ENCODE measurements at regions of chr12 and their contacts with region 1.

Region 1: GRCh38 chr12:68040450-68041075 is 51.3 kb downstream of the IFNG-AS1 start:
- DNase-seq: peak; percentile 85
- H3K4me3 Mint-ChIP-seq: no peak overlapping the region
- H3K27ac Mint-ChIP-seq: peak overlapping the region; percentile 93
- H3K4me1 Mint-ChIP-seq: peaks cover 19% of the 10 kb centered on the region
- H3K27me3 Mint-ChIP-seq: no peaks in the 10 kb centered on the region
- CTCF ChIP-seq: peak; percentile 85

Region 2: GRCh38 chr12:68097386-68097785 is 56.8 kb after region 1 on chr12:
- CTCF ChIA-PET with region 1: interaction called, 10 read pairs
- POLR2A ChIA-PET with region 1: interaction called, 3 read pairs
- intact Hi-C with region 1: no loop called
- DNase-seq: peak; percentile 44
- H3K4me3 Mint-ChIP-seq: no peak overlapping the region
- H3K27ac Mint-ChIP-seq: peak overlapping the region; percentile 39
- H3K4me1 Mint-ChIP-seq: peaks cover 17% of the 10 kb centered on the region
- H3K27me3 Mint-ChIP-seq: peaks cover 9% of the 10 kb centered on the region
- CTCF ChIP-seq: no peak

Region 3: DNA sequence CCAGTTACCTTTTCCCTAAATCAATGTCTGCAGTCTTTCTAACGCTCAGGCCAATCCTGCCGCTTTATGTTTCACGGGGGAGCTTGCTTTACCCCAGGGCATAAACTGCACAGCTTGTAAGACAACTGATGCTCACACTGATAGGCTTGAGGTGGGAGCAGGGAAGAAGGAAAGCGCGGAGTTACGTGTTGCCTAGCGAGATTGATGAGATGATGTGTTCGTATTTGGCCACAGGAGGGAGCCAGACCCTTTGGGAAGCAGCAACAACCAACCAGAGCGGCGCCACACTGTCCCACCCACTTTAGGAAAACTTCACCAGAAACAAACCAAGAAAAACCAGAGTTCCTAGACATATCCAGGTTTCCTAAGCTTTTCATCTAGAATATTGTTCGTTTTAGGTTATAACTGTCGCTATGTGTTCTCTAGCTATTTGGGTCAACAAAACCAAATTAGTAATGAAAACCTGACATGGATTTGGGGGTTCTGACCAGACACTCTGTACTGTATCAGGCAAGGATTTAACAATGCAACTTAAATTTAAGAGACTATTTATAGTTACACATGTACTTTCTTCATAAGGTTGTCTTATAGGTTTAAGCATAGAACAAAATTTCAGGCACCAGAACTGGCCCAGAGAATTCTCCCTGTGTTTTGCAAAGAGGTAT is 182.7 kb after region 1 on chr12:
- CTCF ChIA-PET with region 1: interaction called, 35 read pairs
- POLR2A ChIA-PET with region 1: interaction called, 18 read pairs
- intact Hi-C with region 1: loop called (anchors 1 kb)
- DNase-seq: peak; percentile 88
- H3K4me3 Mint-ChIP-seq: no peak overlapping the region
- H3K27ac Mint-ChIP-seq: no peak overlapping the region
- H3K4me1 Mint-ChIP-seq: peaks cover 20% of the 10 kb centered on the region
- H3K27me3 Mint-ChIP-seq: peaks cover 12% of the 10 kb centered on the region
- CTCF ChIP-seq: peak; percentile 87

Region 4: DNA sequence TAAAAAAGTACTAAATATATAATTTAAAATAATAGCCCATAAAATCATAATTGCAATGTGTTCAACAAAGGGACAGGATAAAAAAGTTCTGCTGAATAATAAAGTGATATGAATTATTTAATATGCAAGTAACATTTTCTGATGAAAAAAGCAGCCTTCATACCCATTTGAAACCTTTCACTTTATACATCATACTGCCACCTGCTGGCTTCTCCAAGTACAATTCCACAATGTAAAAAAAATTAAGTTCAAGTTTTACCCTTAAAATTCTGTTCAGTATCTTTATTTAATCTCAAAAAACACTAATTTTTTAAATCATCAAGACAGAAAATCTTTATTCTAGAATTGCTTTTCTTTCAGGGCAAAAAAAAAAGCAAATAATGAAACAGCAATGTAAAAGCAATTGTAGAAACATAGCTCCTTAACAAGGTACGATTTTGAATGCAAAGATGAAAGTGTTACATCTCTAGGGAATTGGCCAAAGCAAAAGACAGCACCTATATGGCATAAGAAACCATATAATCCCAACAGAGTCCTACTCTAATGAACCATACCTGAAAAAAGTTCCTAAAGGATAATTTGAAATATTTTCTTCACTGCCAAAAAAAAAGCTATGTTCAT is 276.6 kb after region 1 on chr12:
- CTCF ChIA-PET with region 1: interaction called, 62 read pairs
- POLR2A ChIA-PET with region 1: interaction called, 7 read pairs
- intact Hi-C with region 1: loop called (anchors 1 kb)
- DNase-seq: peak; percentile 53
- H3K4me3 Mint-ChIP-seq: no peak overlapping the region
- H3K27ac Mint-ChIP-seq: no peak overlapping the region
- H3K4me1 Mint-ChIP-seq: no peaks in the 10 kb centered on the region
- H3K27me3 Mint-ChIP-seq: no peaks in the 10 kb centered on the region
- CTCF ChIP-seq: peak; percentile 62

Region 5: GRCh38 chr12:68648179-68648578 is 607.6 kb after region 1 on chr12:
- CTCF ChIA-PET with region 1: no interaction called
- POLR2A ChIA-PET with region 1: no interaction called
- intact Hi-C with region 1: no loop called
- DNase-seq: no peak
- H3K4me3 Mint-ChIP-seq: no peak overlapping the region
- H3K27ac Mint-ChIP-seq: no peak overlapping the region
- H3K4me1 Mint-ChIP-seq: no peaks in the 10 kb centered on the region
- H3K27me3 Mint-ChIP-seq: no peaks in the 10 kb centered on the region
- CTCF ChIP-seq: no peak

Region 6: GRCh38 chr12:69157023-69157655 is 1116.6 kb after region 1 on chr12:
- CTCF ChIA-PET with region 1: no interaction called
- POLR2A ChIA-PET with region 1: no interaction called
- intact Hi-C with region 1: loop called (anchors 5 kb)
- DNase-seq: peak; percentile 71
- H3K4me3 Mint-ChIP-seq: no peak overlapping the region
- H3K27ac Mint-ChIP-seq: no peak overlapping the region
- H3K4me1 Mint-ChIP-seq: peaks cover 11% of the 10 kb centered on the region
- H3K27me3 Mint-ChIP-seq: no peaks in the 10 kb centered on the region
- CTCF ChIP-seq: peak; percentile 63